ENCODE measurements at regions of chr2 and their contacts with region 1.

Region 1: DNA sequence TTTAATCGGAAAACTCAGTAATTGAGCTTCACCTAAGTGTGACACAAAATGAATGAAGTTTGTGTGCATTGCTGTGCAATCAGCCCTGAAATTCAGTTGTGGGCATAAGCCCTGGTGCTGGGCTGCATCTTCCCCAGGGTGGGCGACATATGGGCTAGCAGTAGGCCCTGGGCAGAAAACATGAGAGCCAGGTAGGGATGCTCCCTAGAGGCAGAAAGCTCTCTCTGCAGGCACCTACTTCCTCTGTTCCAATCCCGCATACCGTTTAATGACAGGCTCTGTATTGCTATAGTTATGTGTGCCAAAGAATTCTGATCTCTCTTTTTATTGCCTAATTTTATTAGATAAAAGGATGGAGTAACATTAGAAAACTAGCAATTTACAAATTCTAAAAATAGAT is 456.7 kb downstream of the NRXN1 start:
- DNase-seq: no peak
- ATAC-seq: peak; percentile 71
- H3K4me3 ChIP-seq: no peak overlapping the region
- H3K27ac ChIP-seq: no peak overlapping the region
- H3K4me1 ChIP-seq: no peaks in the 10 kb centered on the region
- H3K27me3 ChIP-seq: no peaks in the 10 kb centered on the region
- CTCF ChIP-seq: peak in 2 of 3 experiments; percentile 3 to 23; a peak in 1 of 6 replicates
- POLR2A ChIP-seq: no peak
- RAD21 ChIP-seq: no peak

Region 2: DNA sequence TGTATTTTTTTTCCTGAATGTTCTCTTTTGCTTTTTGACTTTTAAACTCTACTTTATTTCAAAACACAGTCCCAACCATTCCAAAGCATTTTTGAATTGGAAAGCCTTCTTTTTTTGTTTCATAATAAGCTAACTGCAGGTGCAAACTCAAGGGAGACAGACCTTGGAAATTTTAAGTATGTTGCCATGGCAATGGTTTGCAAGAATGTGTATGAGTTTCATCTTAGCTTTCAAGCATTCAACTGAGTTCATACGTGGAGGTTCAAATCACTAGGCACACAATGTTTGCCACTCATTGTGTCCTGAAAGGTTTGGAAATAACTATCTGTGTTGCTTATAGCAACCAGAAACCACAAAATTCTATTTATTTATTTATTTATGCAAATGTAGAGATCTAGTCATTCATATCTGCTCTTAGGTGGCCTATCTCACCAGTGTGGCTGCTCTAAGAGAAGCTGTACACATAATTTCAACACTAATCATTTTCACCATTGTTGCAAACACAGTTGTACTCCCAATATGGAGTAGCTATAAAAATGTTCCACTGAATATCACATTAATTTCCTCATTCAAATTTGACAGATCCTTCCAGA is 615.2 kb before region 1 on chr2:
- CTCF ChIA-PET with region 1: no interaction called
- POLR2A ChIA-PET with region 1: no interaction called
- RAD21 ChIA-PET with region 1: no interaction called
- intact Hi-C with region 1: no loop called
- DNase-seq: no peak
- ATAC-seq: no peak
- H3K4me3 ChIP-seq: no peak overlapping the region
- H3K27ac ChIP-seq: no peak overlapping the region
- H3K4me1 ChIP-seq: no peaks in the 10 kb centered on the region
- H3K27me3 ChIP-seq: no peaks in the 10 kb centered on the region
- CTCF ChIP-seq: no peak
- POLR2A ChIP-seq: no peak
- RAD21 ChIP-seq: no peak

Region 3: DNA sequence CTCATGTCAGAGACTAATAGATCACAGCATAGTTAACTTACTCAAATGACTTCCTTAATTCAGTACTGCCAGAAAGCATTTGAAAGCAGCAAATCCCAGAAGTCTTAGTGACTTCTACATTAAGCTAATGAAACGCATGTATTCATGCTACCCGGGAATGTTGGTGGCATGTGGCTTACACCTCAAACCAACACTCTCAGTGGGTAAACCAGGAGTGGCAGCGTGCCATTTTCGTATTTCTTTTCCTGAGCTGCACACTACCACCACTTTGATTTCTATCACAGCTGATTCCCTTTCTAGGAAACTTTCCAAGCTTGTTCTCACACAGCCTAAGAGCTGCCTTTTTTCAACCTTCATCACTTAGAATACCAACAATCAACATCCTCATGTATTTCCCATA is 189.9 kb before region 1 on chr2:
- CTCF ChIA-PET with region 1: no interaction called
- POLR2A ChIA-PET with region 1: no interaction called
- RAD21 ChIA-PET with region 1: no interaction called
- intact Hi-C with region 1: no loop called
- DNase-seq: no peak
- ATAC-seq: no peak
- H3K4me3 ChIP-seq: no peak overlapping the region
- H3K27ac ChIP-seq: no peak overlapping the region
- H3K4me1 ChIP-seq: no peaks in the 10 kb centered on the region
- H3K27me3 ChIP-seq: no peaks in the 10 kb centered on the region; the same call in 1 of the 2 replicates
- CTCF ChIP-seq: no peak
- POLR2A ChIP-seq: no peak
- RAD21 ChIP-seq: no peak

Region 4: DNA sequence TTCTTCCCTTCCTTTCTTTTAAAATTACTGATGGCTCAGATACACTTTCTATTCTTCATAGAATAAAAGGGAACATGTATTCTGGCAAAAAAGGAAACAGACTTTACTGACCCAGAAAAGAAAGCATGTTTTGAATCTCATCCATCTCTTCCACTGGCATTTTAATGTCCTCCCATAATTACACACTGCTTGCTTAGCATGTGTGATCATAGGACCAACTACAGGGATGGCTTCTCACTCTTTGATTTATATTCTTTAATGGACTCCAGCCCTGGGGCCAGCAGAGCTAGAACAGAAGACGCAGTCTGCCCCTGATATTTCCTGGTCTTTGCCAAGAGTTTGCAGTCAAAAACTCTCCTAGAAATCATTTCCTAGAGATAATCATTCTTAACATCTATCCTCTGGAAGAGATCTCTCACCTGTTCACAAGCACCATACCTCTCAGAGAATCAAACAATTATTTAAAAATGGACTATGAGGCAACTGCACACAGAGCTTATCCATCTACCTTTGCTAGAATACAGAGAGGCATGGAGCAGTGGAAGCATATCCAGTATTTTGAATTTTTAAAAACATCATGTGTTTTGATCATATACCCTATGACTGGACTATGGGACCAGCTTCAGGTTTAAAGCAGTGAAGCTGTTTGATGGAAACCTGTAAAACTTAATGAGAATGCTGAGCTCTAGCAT is 27.6 kb after region 1 on chr2:
- CTCF ChIA-PET with region 1: no interaction called
- POLR2A ChIA-PET with region 1: no interaction called
- RAD21 ChIA-PET with region 1: no interaction called
- intact Hi-C with region 1: loop called (anchors 1 kb)
- DNase-seq: no peak
- ATAC-seq: no peak
- H3K4me3 ChIP-seq: no peak overlapping the region
- H3K27ac ChIP-seq: no peak overlapping the region
- H3K4me1 ChIP-seq: no peaks in the 10 kb centered on the region
- H3K27me3 ChIP-seq: no peaks in the 10 kb centered on the region
- CTCF ChIP-seq: no peak
- POLR2A ChIP-seq: no peak
- RAD21 ChIP-seq: no peak

Region 5: DNA sequence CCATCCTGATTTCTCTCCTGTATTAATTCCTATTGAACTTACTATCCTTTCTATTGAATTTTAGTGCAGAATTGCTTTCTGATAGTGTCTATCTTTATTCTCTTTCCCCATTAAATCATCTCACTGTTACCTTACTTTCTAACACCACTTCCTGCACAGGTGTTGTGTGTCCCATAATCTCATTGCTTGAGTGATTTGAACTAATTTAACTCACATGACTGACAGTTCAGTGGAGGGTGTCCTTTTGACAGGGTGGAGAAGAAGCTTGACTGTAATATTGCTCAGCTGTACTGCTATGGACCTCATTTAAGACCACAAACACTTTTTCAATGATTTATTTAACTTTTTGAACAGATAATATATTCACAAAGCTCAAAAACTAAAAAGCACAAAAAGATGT is 244.9 kb after region 1 on chr2:
- CTCF ChIA-PET with region 1: no interaction called
- POLR2A ChIA-PET with region 1: no interaction called
- RAD21 ChIA-PET with region 1: no interaction called
- intact Hi-C with region 1: no loop called
- DNase-seq: no peak
- ATAC-seq: no peak
- H3K4me3 ChIP-seq: no peak overlapping the region
- H3K27ac ChIP-seq: no peak overlapping the region
- H3K4me1 ChIP-seq: no peaks in the 10 kb centered on the region
- H3K27me3 ChIP-seq: no peaks in the 10 kb centered on the region
- CTCF ChIP-seq: no peak
- POLR2A ChIP-seq: no peak
- RAD21 ChIP-seq: no peak

Measured in HCT116 (cell line).